ENCODE measurements at regions of chr5 and their contacts with region 1.

Region 1: GRCh38 chr5:157130925-157131324 is 11.7 kb downstream of the MED7 start:
- DNase-seq: no peak
- ATAC-seq: no peak
- H3K4me3 ChIP-seq: no peak overlapping the region
- H3K4me3 Mint-ChIP-seq: no peak overlapping the region
- H3K27ac ChIP-seq: no peak overlapping the region
- H3K27ac Mint-ChIP-seq: no peak overlapping the region
- H3K4me1 ChIP-seq: peaks cover 2% of the 10 kb centered on the region
- H3K4me1 Mint-ChIP-seq: peaks cover 14 to 16% of the 10 kb centered on the region in 2 donors
- H3K27me3 ChIP-seq: no peaks in the 10 kb centered on the region
- H3K27me3 Mint-ChIP-seq: no peaks in the 10 kb centered on the region
- CTCF ChIP-seq: no peak

Region 2: GRCh38 chr5:155136216-155136850 is 1994.6 kb before region 1 on chr5:
- intact Hi-C with region 1: loop called (anchors 5 kb)
- DNase-seq: no peak
- ATAC-seq: no peak
- H3K4me3 ChIP-seq: no peak overlapping the region
- H3K4me3 Mint-ChIP-seq: no peak overlapping the region
- H3K27ac ChIP-seq: no peak overlapping the region
- H3K27ac Mint-ChIP-seq: no peak overlapping the region
- H3K4me1 ChIP-seq: no peaks in the 10 kb centered on the region
- H3K4me1 Mint-ChIP-seq: peaks cover 0 to 7% of the 10 kb centered on the region in 2 donors
- H3K27me3 ChIP-seq: no peaks in the 10 kb centered on the region
- H3K27me3 Mint-ChIP-seq: peaks cover 12 to 22% of the 10 kb centered on the region in 2 donors
- CTCF ChIP-seq: no peak

Region 3: DNA sequence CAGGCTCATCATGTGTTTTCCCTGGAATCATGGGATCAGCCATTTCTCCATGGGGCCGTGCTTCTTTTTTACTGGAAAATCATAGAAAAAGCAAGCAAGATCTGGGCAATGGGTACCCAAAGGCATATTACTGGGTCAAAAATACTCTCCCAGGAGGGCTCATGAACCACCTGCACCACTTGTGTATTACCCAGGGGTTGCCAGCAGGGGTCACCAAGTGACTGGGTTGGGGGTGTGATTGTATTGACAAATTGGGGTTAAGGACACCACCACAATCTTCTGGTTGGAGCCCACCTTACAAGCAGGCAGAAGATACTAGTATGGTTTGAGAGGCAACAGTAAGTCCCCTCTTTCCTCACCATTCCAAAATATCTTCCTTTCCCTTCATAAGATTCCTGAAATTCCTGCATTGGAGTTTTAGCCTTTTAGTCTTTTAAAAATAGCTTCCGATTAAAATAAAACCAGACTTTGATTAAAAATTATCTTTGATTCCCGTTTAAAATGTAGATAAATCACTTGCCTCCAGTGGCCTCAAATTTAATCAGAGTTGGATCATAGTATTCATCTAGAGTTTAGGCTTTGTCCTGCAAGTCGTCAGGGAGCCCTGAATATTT is 1514.0 kb before region 1 on chr5:
- intact Hi-C with region 1: loop called (anchors 2 kb)
- DNase-seq: peak; percentile 40 to 59
- ATAC-seq: peak; percentile 55 to 64 (median 57)
- H3K4me3 ChIP-seq: no peak overlapping the region
- H3K4me3 Mint-ChIP-seq: no peak overlapping the region
- H3K27ac ChIP-seq: no peak overlapping the region
- H3K27ac Mint-ChIP-seq: no peak overlapping the region
- H3K4me1 ChIP-seq: no peaks in the 10 kb centered on the region
- H3K4me1 Mint-ChIP-seq: no peaks in the 10 kb centered on the region
- H3K27me3 ChIP-seq: no peaks in the 10 kb centered on the region
- H3K27me3 Mint-ChIP-seq: peaks cover 0 to 15% of the 10 kb centered on the region in 2 donors
- CTCF ChIP-seq: peak; percentile 64

Region 4: DNA sequence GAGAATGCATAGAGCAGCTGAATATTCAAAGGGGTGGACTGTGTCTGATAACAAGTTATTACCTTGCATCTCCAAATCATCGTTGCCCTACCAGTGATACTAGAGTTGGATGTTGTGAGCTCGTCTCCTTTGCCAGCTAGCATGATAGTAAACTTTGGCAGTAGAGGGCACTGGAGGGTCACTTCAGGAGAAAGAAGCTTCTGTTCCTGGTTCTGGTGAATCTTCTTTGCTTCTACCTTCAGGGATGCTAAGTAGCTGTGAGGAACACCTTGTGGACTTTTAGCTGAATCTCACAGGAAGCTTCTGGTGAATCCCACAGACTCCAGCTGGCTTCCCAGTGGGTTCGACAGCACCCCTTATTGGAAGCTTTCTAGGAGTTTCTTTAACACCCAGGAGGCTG is 1430.6 kb before region 1 on chr5:
- intact Hi-C with region 1: loop called (anchors 1 kb)
- DNase-seq: peak in 1 of 2 donors; percentile 60
- ATAC-seq: peak in 2 of 3 donors; percentile 35 to 49
- H3K4me3 ChIP-seq: no peak overlapping the region
- H3K4me3 Mint-ChIP-seq: no peak overlapping the region
- H3K27ac ChIP-seq: no peak overlapping the region
- H3K27ac Mint-ChIP-seq: no peak overlapping the region
- H3K4me1 ChIP-seq: no peaks in the 10 kb centered on the region
- H3K4me1 Mint-ChIP-seq: no peaks in the 10 kb centered on the region
- H3K27me3 ChIP-seq: no peaks in the 10 kb centered on the region
- H3K27me3 Mint-ChIP-seq: no peaks in the 10 kb centered on the region
- CTCF ChIP-seq: peak; percentile 39

Region 5: GRCh38 chr5:155906046-155906445 is 1224.9 kb before region 1 on chr5:
- intact Hi-C with region 1: no loop called
- DNase-seq: peak in 1 of 2 donors; percentile 44
- ATAC-seq: no peak
- H3K4me3 ChIP-seq: no peak overlapping the region
- H3K4me3 Mint-ChIP-seq: no peak overlapping the region
- H3K27ac ChIP-seq: no peak overlapping the region
- H3K27ac Mint-ChIP-seq: no peak overlapping the region
- H3K4me1 ChIP-seq: no peaks in the 10 kb centered on the region
- H3K4me1 Mint-ChIP-seq: no peaks in the 10 kb centered on the region
- H3K27me3 ChIP-seq: no peaks in the 10 kb centered on the region
- H3K27me3 Mint-ChIP-seq: no peaks in the 10 kb centered on the region
- CTCF ChIP-seq: peak; percentile 42

Region 6: GRCh38 chr5:155943516-155944407 is 1187.2 kb before region 1 on chr5:
- intact Hi-C with region 1: loop called (anchors 2 kb)
- DNase-seq: peak in 1 of 2 donors; percentile 65
- ATAC-seq: peak; percentile 55 to 85 (median 83)
- H3K4me3 ChIP-seq: no peak overlapping the region
- H3K4me3 Mint-ChIP-seq: no peak overlapping the region
- H3K27ac ChIP-seq: no peak overlapping the region
- H3K27ac Mint-ChIP-seq: no peak overlapping the region
- H3K4me1 ChIP-seq: no peaks in the 10 kb centered on the region
- H3K4me1 Mint-ChIP-seq: peaks cover 7 to 8% of the 10 kb centered on the region in 2 donors
- H3K27me3 ChIP-seq: no peaks in the 10 kb centered on the region
- H3K27me3 Mint-ChIP-seq: peaks cover 9 to 26% of the 10 kb centered on the region in 2 donors
- CTCF ChIP-seq: peak; percentile 62

Region 7: GRCh38 chr5:156934450-156935211 is 196.3 kb before region 1 on chr5:
- intact Hi-C with region 1: loop called (anchors 10 kb)
- DNase-seq: peak; percentile 51 to 80
- ATAC-seq: peak; percentile 68 to 71 (median 69)
- H3K4me3 ChIP-seq: no peak overlapping the region
- H3K4me3 Mint-ChIP-seq: no peak overlapping the region
- H3K27ac ChIP-seq: no peak overlapping the region
- H3K27ac Mint-ChIP-seq: peak overlapping the region; percentile 65 to 78
- H3K4me1 ChIP-seq: peaks cover 28% of the 10 kb centered on the region
- H3K4me1 Mint-ChIP-seq: peaks cover 48 to 59% of the 10 kb centered on the region in 2 donors
- H3K27me3 ChIP-seq: no peaks in the 10 kb centered on the region
- H3K27me3 Mint-ChIP-seq: peaks cover 0 to 2% of the 10 kb centered on the region in 2 donors
- CTCF ChIP-seq: peak; percentile 93

Region 8: GRCh38 chr5:157740229-157740610 is 609.3 kb after region 1 on chr5:
- intact Hi-C with region 1: no loop called
- DNase-seq: peak in 1 of 2 donors; percentile 61
- ATAC-seq: no peak
- H3K4me3 ChIP-seq: no peak overlapping the region
- H3K4me3 Mint-ChIP-seq: no peak overlapping the region
- H3K27ac ChIP-seq: no peak overlapping the region
- H3K27ac Mint-ChIP-seq: no peak overlapping the region
- H3K4me1 ChIP-seq: peaks cover 12% of the 10 kb centered on the region
- H3K4me1 Mint-ChIP-seq: peaks cover 12 to 20% of the 10 kb centered on the region in 2 donors
- H3K27me3 ChIP-seq: no peaks in the 10 kb centered on the region
- H3K27me3 Mint-ChIP-seq: no peaks in the 10 kb centered on the region
- CTCF ChIP-seq: no peak